Activated naive CD4-positive, alpha-beta T cell treated with anti-CD3 and anti-CD28 coated beads for 36 hours (primary cell): ENCODE measurements at regions of chr17 and their contacts with region 1.

Region 1: GRCh38 chr17:4806777-4807604 is at the start of gene PLD2:
- DNase-seq: peak; percentile 91
- H3K4me3 Mint-ChIP-seq: peak within 1 kb of the TSS; percentile 75
- H3K27ac Mint-ChIP-seq: peak within 1 kb of the TSS; percentile 36
- H3K4me1 Mint-ChIP-seq: peaks cover 10% of the 10 kb centered on the region
- H3K27me3 Mint-ChIP-seq: no peaks in the 10 kb centered on the region
- total RNA-seq, gene PLD2: 17.4 to 17.6 TPM

Region 2: DNA sequence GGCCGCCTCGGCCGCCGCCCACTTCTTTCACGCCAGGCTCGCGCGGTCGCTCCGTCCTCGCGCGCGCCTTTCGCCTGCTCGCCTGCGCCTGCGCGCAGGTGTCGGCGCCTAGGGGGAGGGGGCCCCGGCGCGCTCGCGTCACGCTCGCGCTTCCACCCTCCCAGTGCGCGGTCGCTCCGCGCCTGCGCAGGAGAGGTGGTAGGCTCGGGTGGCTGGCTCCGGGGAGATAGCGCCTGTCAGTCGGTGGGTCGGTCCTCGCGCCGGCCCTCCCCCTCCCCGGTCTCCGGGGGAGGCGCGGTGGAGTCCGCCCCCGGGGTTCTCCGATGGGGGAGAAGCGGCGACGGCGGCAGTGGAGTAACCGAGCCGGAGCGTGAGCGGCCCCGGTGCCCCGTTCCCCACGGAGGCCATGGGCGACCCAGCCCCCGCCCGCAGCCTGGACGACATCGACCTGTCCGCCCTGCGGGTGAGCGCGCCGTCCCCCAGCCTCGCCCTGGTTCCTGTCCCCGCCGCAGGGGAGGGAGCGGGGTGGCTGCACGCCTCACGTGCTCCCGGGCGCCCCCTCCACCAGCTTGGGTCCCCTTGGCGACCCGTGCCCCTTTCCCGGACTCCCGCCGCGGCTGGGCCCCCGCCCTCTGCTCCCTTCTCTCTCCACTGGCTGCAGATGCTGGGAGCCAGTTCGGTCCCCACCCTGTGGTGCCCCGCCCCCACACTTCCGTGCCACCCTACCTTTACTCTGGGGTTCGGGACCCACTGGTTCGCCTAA is 26.4 kb after region 1 on chr17 and contains the start of gene MINK1:
- CTCF ChIA-PET with region 1: no interaction called
- intact Hi-C with region 1: loop called (anchors 1 kb)
- DNase-seq: peak; percentile 82
- H3K4me3 Mint-ChIP-seq: peak within 1 kb of the TSS; percentile 85
- H3K27ac Mint-ChIP-seq: peak within 1 kb of the TSS; percentile 83
- H3K4me1 Mint-ChIP-seq: peaks cover 27% of the 10 kb centered on the region
- H3K27me3 Mint-ChIP-seq: no peaks in the 10 kb centered on the region
- total RNA-seq, gene MINK1: 49.1 to 50.4 TPM